Motor neuron (in vitro differentiated cells): ENCODE measurements at regions of chr5 and their contacts with region 1.

Region 1: GRCh38 chr5:14727428-14727865 is 62.9 kb downstream of the OTULIN start:
- ATAC-seq: peak; percentile 69 to 96 (median 88)
- H3K4me3 ChIP-seq: no peak overlapping the region
- H3K27ac ChIP-seq: no peak overlapping the region
- H3K4me1 ChIP-seq: peaks cover 16 to 22% of the 10 kb centered on the region in 2 donors

Region 2: GRCh38 chr5:14871210-14872069 is 144.0 kb after region 1 on chr5 and contains the start of gene ANKH:
- in situ Hi-C with region 1: loop called in 1 of 9 experiments (anchors 25 kb)
- ATAC-seq: peak; percentile 87 to 96 (median 90)
- H3K4me3 ChIP-seq: peak within 1 kb of the TSS; percentile 64 to 100 (median 91)
- H3K27ac ChIP-seq: peak within 1 kb of the TSS; percentile 92 to 94
- H3K4me1 ChIP-seq: peaks cover 2 to 16% of the 10 kb centered on the region in 2 donors
- total RNA-seq, gene ANKH: 4.6 to 57.0 (median 13.0) TPM

Region 3: GRCh38 chr5:15003511-15003920 is 276.1 kb after region 1 on chr5:
- in situ Hi-C with region 1: loop called in 6 of 9 experiments (anchors 10 to 25 kb)
- ATAC-seq: peak; percentile 60 to 94 (median 84)
- H3K4me3 ChIP-seq: no peak overlapping the region
- H3K27ac ChIP-seq: no peak overlapping the region
- H3K4me1 ChIP-seq: peaks cover 0 to 6% of the 10 kb centered on the region in 2 donors

Region 4: GRCh38 chr5:15013654-15014463 is 286.4 kb after region 1 on chr5:
- in situ Hi-C with region 1: loop called in 8 of 9 experiments (anchors 10 to 25 kb)
- ATAC-seq: peak; percentile 49 to 97 (median 80)
- H3K4me3 ChIP-seq: no peak overlapping the region
- H3K27ac ChIP-seq: no peak overlapping the region
- H3K4me1 ChIP-seq: peaks cover 0 to 2% of the 10 kb centered on the region in 2 donors